Adrenal gland (tissue), 19 donors: ENCODE measurements at regions of chr13 and their contacts with region 1.

Region 1: GRCh38 chr13:101763191-101763590 is 310.7 kb downstream of the ITGBL1 start:
- DNase-seq: no peak
- H3K4me3 ChIP-seq: no peak overlapping the region
- H3K27ac ChIP-seq: no peak overlapping the region
- H3K4me1 ChIP-seq: no peaks in the 10 kb centered on the region
- H3K27me3 ChIP-seq: peaks cover 3% of the 10 kb centered on the region
- CTCF ChIP-seq: no peak
- POLR2A ChIP-seq: no peak

Region 2: DNA sequence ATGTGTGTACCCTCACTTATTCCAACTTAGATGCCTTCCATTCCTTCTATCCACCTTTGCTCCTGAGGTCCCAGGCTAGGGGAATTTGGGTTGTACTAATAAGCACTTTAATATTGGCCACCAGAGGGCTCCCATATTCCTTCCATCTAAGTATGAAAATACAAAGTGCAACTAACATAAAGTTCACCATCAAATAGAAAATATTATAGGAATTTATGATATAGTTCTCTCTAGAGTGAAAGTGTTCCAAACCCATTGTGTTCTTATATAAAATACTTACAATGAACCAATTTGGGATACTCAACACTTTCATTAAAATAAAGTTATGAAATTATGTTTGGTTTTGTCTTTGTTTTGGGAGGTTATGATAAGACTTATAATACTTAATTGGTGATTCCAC is 248.4 kb before region 1 on chr13:
- intact Hi-C with region 1: loop called (anchors 10 kb)
- DNase-seq: peak in 4 of 7 donors; percentile 18 to 43 (median 26)
- H3K4me3 ChIP-seq: no peak overlapping the region
- H3K27ac ChIP-seq: no peak overlapping the region
- H3K4me1 ChIP-seq: no peaks in the 10 kb centered on the region
- H3K27me3 ChIP-seq: no peaks in the 10 kb centered on the region
- CTCF ChIP-seq: peak; percentile 43 to 73 (median 56)
- POLR2A ChIP-seq: no peak